ENCODE measurements at regions of chr16 and their contacts with region 1.

Region 1: GRCh38 chr16:8868416-8869211 is at the start of gene CARHSP1:
- DNase-seq: peak; percentile 76 to 79
- H3K4me3 ChIP-seq: peak within 1 kb of the TSS; percentile 79 to 88 (median 85)
- H3K27ac ChIP-seq: peak within 1 kb of the TSS; percentile 83 to 90
- H3K4me1 ChIP-seq: peaks cover 0 to 17% of the 10 kb centered on the region in 2 donors
- H3K27me3 ChIP-seq: no peaks in the 10 kb centered on the region
- CTCF ChIP-seq: no peak
- POLR2A ChIP-seq: peak; percentile 55
- total RNA-seq, gene CARHSP1: 58.6 to 126 (median 83.9) TPM

Region 2: GRCh38 chr16:10266809-10267208 is 1398.2 kb after region 1 on chr16:
- intact Hi-C with region 1: loop called (anchors 10 kb)
- DNase-seq: no peak
- H3K4me3 ChIP-seq: no peak overlapping the region
- H3K27ac ChIP-seq: no peak overlapping the region
- H3K4me1 ChIP-seq: no peaks in the 10 kb centered on the region
- H3K27me3 ChIP-seq: no peaks in the 10 kb centered on the region
- CTCF ChIP-seq: no peak
- POLR2A ChIP-seq: no peak

Measured in breast epithelium (tissue), 4 donors.